Uterus (tissue), 4 donors: ENCODE measurements at regions of chr17 and their contacts with region 1.

Region 1: DNA sequence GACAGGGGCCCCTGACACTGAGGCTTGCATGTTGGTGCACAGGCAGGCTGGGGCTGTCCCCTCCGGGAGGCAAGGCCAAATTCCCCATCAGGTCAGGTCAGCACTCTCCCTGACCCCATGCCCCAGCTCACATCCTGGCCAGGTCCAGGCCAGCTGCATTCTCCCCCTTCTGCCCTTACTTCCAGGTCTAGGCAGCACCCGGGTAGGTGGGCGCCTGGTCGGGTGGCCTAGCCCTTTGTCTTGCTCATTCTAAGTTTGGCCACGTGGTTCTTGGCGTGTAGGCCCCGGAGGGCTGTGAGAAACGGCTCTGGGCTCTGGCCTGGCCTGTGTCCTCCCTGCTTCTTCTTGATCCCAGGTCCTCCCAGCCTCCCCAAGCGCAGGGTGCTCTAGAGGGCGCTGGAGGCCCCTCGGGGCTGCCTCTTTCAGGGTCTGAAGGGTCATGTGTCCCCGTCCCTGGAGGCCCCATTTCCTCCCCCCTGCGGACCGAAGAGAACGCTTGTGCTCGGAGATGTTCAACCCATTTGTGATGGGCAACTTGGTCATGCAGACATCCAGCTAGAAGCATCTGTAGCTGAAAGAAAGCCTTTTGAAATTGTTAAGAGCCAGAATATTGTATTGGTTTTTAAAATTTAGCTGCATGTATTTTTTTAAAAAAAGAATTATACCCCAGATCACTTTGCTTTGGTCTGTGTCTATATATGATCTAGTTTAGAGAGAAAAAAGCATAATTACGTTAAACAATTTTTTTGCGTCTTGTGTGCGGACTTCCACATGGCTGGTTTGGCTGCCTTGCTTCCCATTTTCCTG is 6.7 kb downstream of the BAHCC1 start:
- DNase-seq: no peak
- H3K4me3 ChIP-seq: no peak overlapping the region
- H3K27ac ChIP-seq: peak overlapping the region; percentile 97
- H3K4me1 ChIP-seq: peaks cover 0 to 34% of the 10 kb centered on the region in 2 donors
- H3K27me3 ChIP-seq: no peaks in the 10 kb centered on the region
- CTCF ChIP-seq: peak in 1 of 4 experiments; percentile 30
- POLR2A ChIP-seq: no peak

Region 2: DNA sequence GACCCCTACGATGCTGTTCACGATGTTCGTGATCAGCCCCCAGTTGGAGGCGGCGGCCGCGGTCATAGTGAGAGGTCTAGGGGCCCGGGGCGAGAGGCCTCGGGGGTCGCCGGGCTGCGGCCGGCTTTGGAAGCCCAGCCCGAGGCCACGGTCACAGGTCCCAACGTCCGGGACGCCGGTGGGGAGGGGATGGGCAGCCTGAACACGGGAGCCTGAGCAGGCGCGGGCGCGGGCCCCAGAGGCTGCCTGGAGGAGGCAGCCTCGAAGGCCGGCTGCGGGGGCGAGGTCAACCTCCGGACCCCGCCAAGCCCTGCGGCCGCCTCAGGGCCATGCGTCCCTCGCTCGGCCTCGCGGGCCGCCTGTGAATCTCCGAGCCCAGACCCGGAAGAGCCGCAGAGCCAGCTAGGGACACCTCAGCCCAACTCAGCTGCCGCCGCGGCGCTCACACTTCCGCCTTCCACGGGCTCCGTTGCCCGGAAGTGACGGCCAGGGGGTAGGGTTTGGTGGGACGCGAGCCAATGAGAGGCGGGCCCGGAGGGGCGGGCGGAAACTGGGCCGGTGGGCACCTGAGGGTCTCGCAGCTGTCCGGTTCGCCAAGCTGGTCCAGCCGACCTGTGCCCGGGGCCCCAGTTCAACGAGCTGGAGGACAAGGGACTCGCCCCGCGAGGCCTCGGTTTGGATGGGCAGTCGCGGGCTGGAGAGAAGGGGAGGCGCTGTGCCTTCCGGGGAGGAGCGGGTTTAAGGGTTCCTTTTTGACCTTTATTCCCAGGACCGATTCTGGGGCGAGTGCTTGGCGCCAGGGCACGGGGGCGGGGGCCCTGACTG is 106.9 kb before region 1 on chr17 and contains the start of gene SLC38A10:
- intact Hi-C with region 1: loop called (anchors 10 kb)
- DNase-seq: peak; percentile 88 to 91
- H3K4me3 ChIP-seq: peak within 1 kb of the TSS; percentile 64 to 94
- H3K27ac ChIP-seq: peak within 1 kb of the TSS; percentile 87 to 89
- H3K4me1 ChIP-seq: peaks cover 4 to 7% of the 10 kb centered on the region in 2 donors
- H3K27me3 ChIP-seq: no peaks in the 10 kb centered on the region
- CTCF ChIP-seq: peak in 3 of 4 experiments; percentile 4 to 46 (median 36)
- POLR2A ChIP-seq: peak; percentile 87 to 97
- total RNA-seq, gene SLC38A10: 50.7 to 55.4 (median 53.3) TPM